ENCODE measurements at regions of chr6 and their contacts with region 1.

Region 1: DNA sequence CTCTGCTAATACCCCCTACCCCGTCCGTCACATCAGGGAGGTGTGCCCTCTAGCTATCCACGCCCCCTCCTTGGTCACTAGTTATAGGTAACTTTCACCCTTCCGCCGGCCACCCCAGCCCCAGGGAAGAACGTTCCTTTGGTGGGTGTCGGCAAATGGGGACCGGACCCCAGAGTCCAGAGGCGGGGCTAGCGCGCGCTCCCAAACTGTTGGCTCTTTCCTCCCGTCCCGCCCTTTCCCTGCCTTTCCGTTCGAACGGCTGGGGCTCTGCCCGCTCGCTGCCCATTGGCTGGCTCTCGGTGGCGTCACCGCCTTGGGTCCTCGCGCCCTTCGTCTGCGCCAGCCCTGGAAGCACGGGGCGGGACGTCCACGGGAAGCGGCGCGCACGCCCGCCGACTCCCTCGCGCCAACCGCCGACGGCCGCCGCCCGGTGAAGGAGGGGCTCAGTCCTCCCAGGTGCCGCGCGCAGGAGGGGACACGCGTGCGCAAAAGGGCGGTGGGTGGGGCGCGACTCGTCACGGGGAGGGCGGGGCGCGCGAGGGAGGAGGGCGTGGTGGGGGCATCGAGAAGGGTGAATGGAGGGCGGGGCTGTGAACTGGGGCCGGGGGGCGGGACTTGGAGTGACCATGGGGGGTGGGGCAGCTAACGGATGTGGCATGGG is 634 bp upstream of the PHF1 start:
- DNase-seq: peak; percentile 98
- H3K4me3 ChIP-seq: peak overlapping the region; percentile 100
- H3K27ac ChIP-seq: peak overlapping the region; percentile 100
- H3K4me1 ChIP-seq: peaks cover 6% of the 10 kb centered on the region
- H3K27me3 ChIP-seq: no peaks in the 10 kb centered on the region
- CTCF ChIP-seq: peak in 1 of 4 experiments; percentile 16
- POLR2A ChIP-seq: peak; percentile 95

Region 2: GRCh38 chr6:32369675-32370074 is 1040.5 kb before region 1 on chr6:
- intact Hi-C with region 1: no loop called
- DNase-seq: no peak
- H3K4me3 ChIP-seq: no peak overlapping the region
- H3K27ac ChIP-seq: no peak overlapping the region
- H3K4me1 ChIP-seq: no peaks in the 10 kb centered on the region
- H3K27me3 ChIP-seq: no peaks in the 10 kb centered on the region
- CTCF ChIP-seq: no peak
- POLR2A ChIP-seq: no peak

Region 3: DNA sequence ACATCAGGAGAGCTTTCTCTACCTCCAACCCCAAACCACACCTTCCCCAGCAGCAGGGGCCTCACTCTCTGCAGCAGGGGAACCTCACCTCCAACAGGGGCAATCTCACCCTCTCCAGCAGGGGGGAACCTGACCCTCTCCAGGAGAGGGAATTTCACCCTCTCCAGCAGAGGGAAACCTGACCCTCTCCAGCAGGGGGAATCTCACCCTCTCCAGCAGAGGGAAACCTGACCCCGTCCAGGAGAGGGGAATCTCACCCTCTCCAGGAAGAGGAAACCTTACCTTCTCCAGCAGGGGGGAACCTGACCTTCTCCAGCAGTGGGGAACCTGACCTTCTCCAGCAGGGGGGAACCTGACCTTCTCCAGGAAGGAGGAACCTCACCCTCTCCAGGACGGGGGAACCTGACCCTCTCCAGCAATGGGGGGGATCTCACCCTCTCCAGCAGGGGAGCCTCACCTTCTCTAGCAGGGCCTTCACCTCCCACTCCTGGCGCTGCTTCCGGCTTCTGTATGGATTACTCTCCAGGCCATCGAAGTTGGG is 130.1 kb before region 1 on chr6:
- intact Hi-C with region 1: no loop called
- DNase-seq: no peak
- H3K4me3 ChIP-seq: no peak overlapping the region
- H3K27ac ChIP-seq: no peak overlapping the region
- H3K4me1 ChIP-seq: peaks cover 12% of the 10 kb centered on the region
- H3K27me3 ChIP-seq: no peaks in the 10 kb centered on the region
- CTCF ChIP-seq: peak in 1 of 4 experiments; percentile 49
- POLR2A ChIP-seq: no peak

Region 4: DNA sequence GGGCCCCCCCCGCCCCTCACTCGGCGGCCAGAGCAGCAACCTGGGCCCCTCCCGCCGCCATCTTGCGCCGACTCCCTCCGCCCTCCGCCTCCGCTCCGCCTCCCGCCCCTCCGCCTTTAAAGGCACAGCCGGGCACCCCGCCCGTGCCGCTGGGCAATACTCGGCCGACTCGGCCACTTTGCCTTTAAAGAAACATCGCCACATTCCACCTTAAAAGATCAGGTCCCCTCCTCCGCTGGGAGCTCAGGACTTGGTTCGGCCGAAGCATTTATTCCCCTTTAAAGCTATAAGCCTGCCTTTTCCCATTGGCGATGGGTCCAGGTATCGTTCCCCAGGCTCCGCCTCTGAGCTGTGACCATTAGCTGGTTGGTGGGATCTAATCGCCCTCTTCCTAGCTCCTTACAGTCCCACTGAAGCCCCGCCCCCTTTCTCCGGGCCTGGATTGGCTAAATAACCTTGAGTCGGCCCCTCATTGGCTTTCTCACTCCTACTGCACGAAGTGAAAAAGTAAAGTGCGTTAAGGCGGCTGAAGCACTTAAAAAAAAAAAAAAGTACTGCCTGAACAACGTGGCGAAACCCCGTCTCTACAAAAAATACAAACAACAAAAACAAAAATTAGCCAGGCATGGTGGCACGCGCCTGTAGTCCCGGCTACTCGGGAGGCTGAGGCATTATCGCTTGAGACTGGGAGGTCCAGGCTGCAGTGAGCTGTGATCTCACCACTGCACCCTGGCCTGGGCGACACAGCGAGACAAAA is 92.3 kb before region 1 on chr6 and contains the start of gene ZBTB22:
- intact Hi-C with region 1: loop called (anchors 5 kb)
- DNase-seq: peak; percentile 99
- H3K4me3 ChIP-seq: peak within 1 kb of the TSS; percentile 43 to 44
- H3K27ac ChIP-seq: peak within 1 kb of the TSS; percentile 88 to 99
- H3K4me1 ChIP-seq: peaks cover 18% of the 10 kb centered on the region
- H3K27me3 ChIP-seq: no peaks in the 10 kb centered on the region
- CTCF ChIP-seq: peak in 2 of 4 experiments; percentile 16 to 32
- POLR2A ChIP-seq: peak; percentile 43
- total RNA-seq, gene ZBTB22: 25.1 to 27.5 TPM

Region 5: GRCh38 chr6:33391278-33391921 is 18.8 kb before region 1 on chr6 and contains the start of gene KIFC1:
- intact Hi-C with region 1: loop called (anchors 1 kb)
- DNase-seq: peak; percentile 99
- H3K4me3 ChIP-seq: peak within 1 kb of the TSS; percentile 25 to 41
- H3K27ac ChIP-seq: peak within 1 kb of the TSS; percentile 92
- H3K4me1 ChIP-seq: no peaks in the 10 kb centered on the region
- H3K27me3 ChIP-seq: no peaks in the 10 kb centered on the region
- CTCF ChIP-seq: peak; percentile 97 to 99 (median 99)
- POLR2A ChIP-seq: peak; percentile 40
- total RNA-seq, gene KIFC1: 5.8 to 6.5 TPM

Region 6: GRCh38 chr6:34459899-34460593 is 1049.9 kb after region 1 on chr6:
- intact Hi-C with region 1: no loop called
- DNase-seq: peak; percentile 44
- H3K4me3 ChIP-seq: no peak overlapping the region
- H3K27ac ChIP-seq: no peak overlapping the region
- H3K4me1 ChIP-seq: peaks cover 4% of the 10 kb centered on the region
- H3K27me3 ChIP-seq: no peaks in the 10 kb centered on the region
- CTCF ChIP-seq: peak; percentile 27 to 59 (median 51)
- POLR2A ChIP-seq: no peak